Activated naive CD4-positive, alpha-beta T cell treated with anti-CD3 and anti-CD28 coated beads for 36 hours (primary cell): ENCODE measurements at regions of chr6 and their contacts with region 1.

Region 1: DNA sequence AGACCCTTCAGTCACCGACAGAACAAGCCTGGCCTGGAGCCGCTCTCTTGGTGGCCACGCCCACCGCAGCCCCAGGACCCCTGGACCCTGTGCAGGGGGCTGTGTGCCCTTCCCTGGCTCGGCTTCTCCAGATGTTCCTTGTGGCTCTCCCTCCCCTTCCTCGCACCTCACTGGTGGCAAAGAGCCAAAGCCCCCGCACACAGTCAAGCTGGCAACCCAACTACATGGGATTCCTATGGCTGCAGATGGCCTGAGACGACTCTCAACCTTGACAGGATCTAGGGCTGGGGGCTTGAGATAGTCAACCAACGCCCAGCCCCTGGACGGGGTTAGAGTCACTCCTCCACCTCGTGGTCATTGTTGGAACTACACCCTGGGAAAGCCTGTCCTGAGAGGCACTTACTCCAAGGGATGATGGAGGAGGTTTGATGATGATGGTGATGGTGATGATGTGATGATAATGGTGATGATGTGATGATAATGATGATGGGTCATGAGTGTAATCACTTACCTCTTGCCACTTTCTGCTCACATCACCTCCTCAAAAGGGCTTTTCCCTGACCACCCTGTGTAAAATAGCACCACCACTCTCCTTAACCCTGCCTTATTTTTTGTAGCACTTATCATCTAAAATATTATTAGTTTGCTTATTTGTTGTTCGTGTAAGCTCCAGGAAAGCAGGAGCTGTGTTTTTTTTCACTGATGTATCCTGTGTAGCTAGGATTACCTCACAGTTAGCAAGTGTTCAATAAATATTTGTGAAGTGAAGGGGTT is 278.4 kb downstream of the LRFN2 start:
- DNase-seq: peak; percentile 82
- H3K4me3 Mint-ChIP-seq: no peak overlapping the region
- H3K27ac Mint-ChIP-seq: no peak overlapping the region
- H3K4me1 Mint-ChIP-seq: no peaks in the 10 kb centered on the region
- H3K27me3 Mint-ChIP-seq: peaks cover 33% of the 10 kb centered on the region

Region 2: GRCh38 chr6:39347906-39348585 is 960.7 kb before region 1 on chr6:
- CTCF ChIA-PET with region 1: no interaction called
- intact Hi-C with region 1: loop called (anchors 5 kb)
- DNase-seq: peak; percentile 76
- H3K4me3 Mint-ChIP-seq: no peak overlapping the region
- H3K27ac Mint-ChIP-seq: no peak overlapping the region
- H3K4me1 Mint-ChIP-seq: no peaks in the 10 kb centered on the region
- H3K27me3 Mint-ChIP-seq: no peaks in the 10 kb centered on the region

Region 3: GRCh38 chr6:39361657-39362486 is 946.8 kb before region 1 on chr6:
- CTCF ChIA-PET with region 1: interaction called, 3 read pairs
- intact Hi-C with region 1: loop called (anchors 5 kb)
- DNase-seq: peak; percentile 65
- H3K4me3 Mint-ChIP-seq: no peak overlapping the region
- H3K27ac Mint-ChIP-seq: no peak overlapping the region
- H3K4me1 Mint-ChIP-seq: no peaks in the 10 kb centered on the region
- H3K27me3 Mint-ChIP-seq: peaks cover 9% of the 10 kb centered on the region

Region 4: GRCh38 chr6:39865011-39865888 is 443.5 kb before region 1 on chr6:
- CTCF ChIA-PET with region 1: interaction called, 4 read pairs
- intact Hi-C with region 1: loop called (anchors 5 kb)
- DNase-seq: peak; percentile 79
- H3K4me3 Mint-ChIP-seq: no peak overlapping the region
- H3K27ac Mint-ChIP-seq: no peak overlapping the region
- H3K4me1 Mint-ChIP-seq: no peaks in the 10 kb centered on the region
- H3K27me3 Mint-ChIP-seq: peaks cover 12% of the 10 kb centered on the region

Region 5: GRCh38 chr6:39980839-39981580 is 327.7 kb before region 1 on chr6:
- CTCF ChIA-PET with region 1: interaction called, 3 read pairs
- intact Hi-C with region 1: loop called (anchors 1 kb)
- DNase-seq: peak; percentile 25
- H3K4me3 Mint-ChIP-seq: no peak overlapping the region
- H3K27ac Mint-ChIP-seq: no peak overlapping the region
- H3K4me1 Mint-ChIP-seq: no peaks in the 10 kb centered on the region
- H3K27me3 Mint-ChIP-seq: peaks cover 37% of the 10 kb centered on the region

Region 6: DNA sequence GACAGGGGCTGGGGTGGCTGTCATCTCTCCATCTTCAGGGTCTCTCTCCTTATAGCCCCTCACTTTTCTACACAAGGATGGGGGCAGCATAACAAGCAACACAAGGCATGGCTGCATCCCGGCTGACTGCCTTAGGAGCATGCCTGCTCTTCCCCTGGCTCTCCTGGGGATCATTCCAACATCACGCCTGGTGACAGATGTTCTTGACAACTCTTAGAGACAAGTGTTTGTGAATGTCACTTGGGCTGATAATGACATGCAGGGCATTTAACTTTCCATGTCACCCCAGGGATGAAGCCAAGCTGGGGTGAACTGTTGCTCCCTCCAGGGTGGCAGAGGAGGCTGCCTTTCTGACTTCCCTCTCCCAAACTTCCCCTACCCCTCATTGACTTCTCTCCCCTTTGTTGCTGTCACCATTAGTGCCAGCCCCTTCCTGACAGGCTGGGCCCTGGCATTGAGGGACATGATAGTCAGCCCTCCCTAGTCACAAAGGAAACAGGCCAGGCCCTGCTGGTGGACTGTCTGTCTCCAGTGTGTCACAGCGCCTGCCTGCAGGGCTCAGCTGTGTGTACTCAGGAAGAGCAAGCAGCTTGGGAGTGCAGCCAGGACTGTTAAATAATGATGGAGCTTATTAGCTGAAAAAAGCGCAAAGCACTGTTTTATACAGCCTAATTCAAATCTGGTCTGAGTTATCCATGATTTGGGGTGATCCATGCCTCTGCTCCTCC is 116.6 kb after region 1 on chr6:
- CTCF ChIA-PET with region 1: no interaction called
- intact Hi-C with region 1: no loop called
- DNase-seq: no peak
- H3K4me3 Mint-ChIP-seq: no peak overlapping the region
- H3K27ac Mint-ChIP-seq: no peak overlapping the region
- H3K4me1 Mint-ChIP-seq: no peaks in the 10 kb centered on the region
- H3K27me3 Mint-ChIP-seq: no peaks in the 10 kb centered on the region

Region 7: GRCh38 chr6:40648944-40649343 is 340.2 kb after region 1 on chr6:
- CTCF ChIA-PET with region 1: no interaction called
- intact Hi-C with region 1: no loop called
- DNase-seq: no peak
- H3K4me3 Mint-ChIP-seq: no peak overlapping the region
- H3K27ac Mint-ChIP-seq: no peak overlapping the region
- H3K4me1 Mint-ChIP-seq: no peaks in the 10 kb centered on the region
- H3K27me3 Mint-ChIP-seq: peaks cover 12% of the 10 kb centered on the region